A673 (cell line): ENCODE measurements at regions of chr15 and their contacts with region 1.

Region 1: DNA sequence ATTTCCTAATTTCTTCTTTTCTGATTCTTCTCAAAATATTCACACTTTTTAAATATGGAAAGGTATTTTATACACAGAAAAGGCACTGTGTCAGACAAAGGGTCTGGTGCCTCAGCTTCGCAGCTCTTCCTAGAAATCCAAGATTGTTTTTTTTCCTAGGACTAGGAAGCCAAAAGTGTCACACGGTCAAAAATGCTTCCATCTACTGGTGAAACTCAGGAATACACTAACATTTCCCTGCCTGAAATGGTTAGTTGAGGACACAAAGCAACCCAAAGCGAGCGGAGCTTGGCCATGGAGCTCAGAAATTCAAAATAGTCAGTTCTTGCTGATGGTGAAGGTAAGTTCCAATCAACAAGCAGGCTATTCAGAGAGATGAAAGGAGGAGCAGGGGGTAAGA is 426.5 kb upstream of the RASGRP1 start:
- DNase-seq: peak; percentile 10
- H3K4me3 ChIP-seq: no peak overlapping the region
- H3K27ac ChIP-seq: no peak overlapping the region
- H3K4me1 ChIP-seq: no peaks in the 10 kb centered on the region
- H3K27me3 ChIP-seq: peaks cover 10% of the 10 kb centered on the region
- CTCF ChIP-seq: peak; percentile 43

Region 2: DNA sequence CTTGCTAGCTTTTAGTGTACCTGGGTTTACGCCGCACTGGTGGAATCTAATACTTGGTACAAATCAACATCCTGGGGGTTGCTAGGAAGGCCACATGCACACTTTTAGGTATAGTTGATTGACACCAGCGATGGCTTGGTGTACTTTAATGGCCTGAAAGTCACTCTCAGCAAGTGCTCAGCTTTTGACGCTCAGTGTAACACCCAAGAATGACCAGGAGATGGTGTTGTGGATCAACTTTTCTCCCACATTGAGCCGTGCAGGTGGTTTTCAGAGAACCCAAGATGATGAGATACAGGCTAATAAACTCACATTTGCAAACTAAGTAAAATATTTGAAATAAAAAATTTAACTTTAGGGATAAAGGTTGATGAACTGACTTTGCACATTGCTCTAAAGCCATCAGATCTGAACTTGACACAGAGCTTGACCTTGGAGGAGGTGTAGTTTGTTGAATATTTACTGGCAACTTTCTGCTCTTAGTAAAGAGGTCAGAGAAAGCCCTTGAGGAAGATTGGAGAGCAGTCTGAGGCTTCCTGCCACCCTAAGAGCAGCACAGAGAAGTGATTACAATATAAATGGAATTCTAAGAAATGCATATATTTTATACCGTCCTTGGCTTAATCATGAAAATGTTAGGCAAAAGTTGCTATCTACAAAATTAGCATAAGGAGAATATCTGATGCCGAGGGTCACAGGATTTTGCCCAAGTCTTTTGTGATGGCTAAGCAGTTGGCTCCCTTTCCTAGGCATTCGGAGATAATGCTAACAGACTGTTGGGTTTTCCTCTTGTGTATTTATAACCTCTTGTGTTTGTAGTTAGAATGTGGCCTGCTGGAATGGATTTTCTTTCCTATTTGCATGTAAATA is 283.1 kb before region 1 on chr15:
- CTCF ChIA-PET with region 1: no interaction called
- POLR2A ChIA-PET with region 1: no interaction called
- intact Hi-C with region 1: loop called (anchors 5 kb)
- DNase-seq: peak; percentile 50
- H3K4me3 ChIP-seq: no peak overlapping the region
- H3K27ac ChIP-seq: no peak overlapping the region
- H3K4me1 ChIP-seq: no peaks in the 10 kb centered on the region
- H3K27me3 ChIP-seq: peaks cover 15% of the 10 kb centered on the region
- CTCF ChIP-seq: peak; percentile 70

Region 3: GRCh38 chr15:38817427-38818156 is 173.5 kb before region 1 on chr15:
- CTCF ChIA-PET with region 1: no interaction called
- POLR2A ChIA-PET with region 1: no interaction called
- intact Hi-C with region 1: loop called (anchors 10 kb)
- DNase-seq: peak; percentile 49
- H3K4me3 ChIP-seq: no peak overlapping the region
- H3K27ac ChIP-seq: no peak overlapping the region
- H3K4me1 ChIP-seq: no peaks in the 10 kb centered on the region
- H3K27me3 ChIP-seq: peaks cover 10% of the 10 kb centered on the region
- CTCF ChIP-seq: peak; percentile 99

Region 4: DNA sequence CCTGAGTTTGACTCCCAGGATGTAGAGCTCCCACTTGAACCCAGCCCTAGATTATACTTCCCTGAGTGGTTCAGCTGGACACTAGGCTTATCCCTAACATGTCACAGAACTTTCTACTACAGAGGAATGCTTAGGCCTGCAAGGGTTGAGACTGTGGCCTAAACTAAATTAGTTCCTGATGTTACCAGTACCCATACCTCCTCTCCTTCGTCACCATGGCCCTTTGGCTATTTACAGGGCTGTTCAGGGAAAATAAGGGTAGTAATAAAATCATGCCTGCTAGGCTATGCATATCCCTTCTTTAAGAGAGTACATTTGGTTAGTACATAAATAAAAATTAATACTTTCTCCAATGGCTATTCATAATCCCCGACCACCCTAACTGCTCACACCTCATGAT is 70.2 kb before region 1 on chr15:
- CTCF ChIA-PET with region 1: no interaction called
- POLR2A ChIA-PET with region 1: no interaction called
- intact Hi-C with region 1: loop called (anchors 10 kb)
- DNase-seq: no peak
- H3K4me3 ChIP-seq: no peak overlapping the region
- H3K27ac ChIP-seq: no peak overlapping the region
- H3K4me1 ChIP-seq: no peaks in the 10 kb centered on the region
- H3K27me3 ChIP-seq: no peaks in the 10 kb centered on the region
- CTCF ChIP-seq: no peak